ENCODE measurements at regions of chr6 and their contacts with region 1.

Region 1: GRCh38 chr6:13402711-13403110 is 74.4 kb upstream of the TBC1D7 start:
- DNase-seq: no peak
- H3K4me3 ChIP-seq: no peak overlapping the region
- H3K27ac ChIP-seq: no peak overlapping the region
- H3K27me3 ChIP-seq: no peaks in the 10 kb centered on the region
- CTCF ChIP-seq: no peak

Region 2: DNA sequence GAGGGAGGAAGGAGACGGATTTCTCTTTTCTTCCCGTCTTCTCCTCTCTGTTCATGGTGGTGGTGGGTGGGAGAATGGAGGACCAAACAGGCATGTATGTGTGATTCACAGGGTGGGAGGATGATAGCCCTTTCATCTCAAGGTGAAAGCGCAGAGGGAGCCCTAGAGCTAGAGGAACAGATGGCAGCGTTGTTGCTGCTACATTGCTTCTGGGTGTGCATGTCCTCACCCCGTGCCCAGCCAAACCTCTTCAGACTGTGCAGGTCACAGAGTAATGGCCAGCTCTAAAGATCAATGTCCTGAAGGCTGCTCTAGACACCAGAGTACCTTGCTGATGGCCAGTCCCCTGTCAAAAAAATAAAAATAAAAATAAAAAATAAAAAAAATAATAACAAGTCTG is 376.2 kb before region 1 on chr6:
- CTCF ChIA-PET with region 1: no interaction called
- POLR2A ChIA-PET with region 1: no interaction called
- DNase-seq: no peak
- H3K4me3 ChIP-seq: no peak overlapping the region
- H3K27ac ChIP-seq: no peak overlapping the region
- H3K27me3 ChIP-seq: no peaks in the 10 kb centered on the region
- CTCF ChIP-seq: no peak

Region 3: DNA sequence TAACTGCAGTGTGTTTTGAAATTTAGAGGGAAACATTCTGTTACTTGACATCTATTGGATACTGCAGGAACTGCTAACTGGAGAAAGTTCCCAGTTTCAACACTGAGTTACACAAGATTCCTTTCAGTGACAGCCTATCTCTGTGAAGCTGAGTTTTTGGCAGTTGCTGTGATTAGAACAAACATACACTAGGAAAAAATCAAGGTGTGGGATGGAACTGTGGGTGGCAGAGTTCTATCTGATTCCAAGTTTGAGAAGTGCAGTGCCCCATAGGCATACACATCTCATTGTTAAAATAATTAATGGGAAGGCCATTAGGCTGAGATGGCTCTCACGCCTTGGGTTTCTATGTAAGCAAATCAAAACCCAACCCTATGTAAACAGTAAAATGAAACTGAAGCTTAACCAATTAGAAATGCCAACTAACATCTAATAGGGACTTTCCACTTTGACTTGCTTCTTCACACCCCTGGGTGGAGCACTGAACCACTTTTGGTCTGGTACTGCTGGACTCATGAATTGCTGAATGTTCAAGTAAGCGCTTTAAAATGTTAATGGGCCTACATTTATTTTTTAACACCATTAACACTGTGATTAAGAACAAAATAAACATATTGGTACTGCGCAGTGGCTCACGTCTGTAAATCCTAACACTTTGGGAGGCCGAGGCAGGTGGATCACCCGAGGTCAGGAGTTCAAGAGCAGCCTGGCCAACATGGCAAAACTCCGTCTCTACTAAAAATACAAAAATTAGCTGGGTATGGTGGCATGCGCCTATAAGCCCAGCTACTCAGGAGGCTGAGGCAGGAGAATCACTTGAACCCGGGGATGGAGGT is 19.2 kb before region 1 on chr6:
- CTCF ChIA-PET with region 1: interaction called, 10 read pairs
- POLR2A ChIA-PET with region 1: interaction called, 3 read pairs
- DNase-seq: no peak
- H3K4me3 ChIP-seq: no peak overlapping the region
- H3K27ac ChIP-seq: peak overlapping the region; percentile 21
- H3K27me3 ChIP-seq: no peaks in the 10 kb centered on the region
- CTCF ChIP-seq: 0 out of 2 replicates have a peak, but pooled peaks have one; percentile 26

Measured in AG04450 (cell line).